Activated B cell treated with CpG ODN at 0.5 μM for 24 hours (primary cell): ENCODE measurements at regions of chr3 and their contacts with region 1.

Region 1: DNA sequence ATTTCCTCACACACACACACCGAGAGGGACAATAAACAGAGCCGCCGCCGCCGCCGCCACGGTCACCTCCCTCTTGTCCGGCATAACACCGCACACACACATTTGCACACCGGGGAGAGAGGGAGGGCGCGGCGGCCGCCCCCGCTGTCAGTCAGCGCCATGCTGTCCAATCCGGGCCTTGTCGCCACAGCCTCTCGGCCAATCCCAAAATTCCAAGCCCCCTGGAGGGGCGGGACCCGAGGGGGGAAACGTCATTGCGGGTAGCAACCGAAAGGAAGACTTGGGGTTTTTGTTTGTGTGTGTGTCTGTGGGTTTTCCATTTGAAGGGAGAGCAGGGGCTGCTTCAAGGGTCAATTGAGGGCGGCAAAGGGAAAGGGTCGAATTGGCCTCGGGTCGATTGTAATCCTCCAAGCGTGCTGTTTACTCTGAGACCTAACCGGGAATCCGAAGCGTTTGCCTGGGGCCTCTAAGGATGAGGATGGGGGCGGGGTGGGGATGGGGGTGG is at the start of gene TOP2B:
- DNase-seq: peak; percentile 89
- ATAC-seq: peak; percentile 85
- H3K4me3 Mint-ChIP-seq: peak within 1 kb of the TSS; percentile 93
- H3K27ac Mint-ChIP-seq: peak within 1 kb of the TSS; percentile 99
- H3K4me1 Mint-ChIP-seq: peaks cover 53% of the 10 kb centered on the region
- H3K27me3 Mint-ChIP-seq: no peaks in the 10 kb centered on the region
- CTCF ChIP-seq: no peak
- total RNA-seq, gene TOP2B: 117 and 125 TPM in 2 replicates

Region 2: GRCh38 chr3:23945903-23946751 is 1718.7 kb before region 1 on chr3:
- CTCF ChIA-PET with region 1: no interaction called
- POLR2A ChIA-PET with region 1: no interaction called
- intact Hi-C with region 1: loop called (anchors 10 kb)
- DNase-seq: peak; percentile 97
- ATAC-seq: peak; percentile 79
- H3K4me3 Mint-ChIP-seq: peak overlapping the region; percentile 86
- H3K27ac Mint-ChIP-seq: peak overlapping the region; percentile 94
- H3K4me1 Mint-ChIP-seq: peaks cover 44% of the 10 kb centered on the region
- H3K27me3 Mint-ChIP-seq: no peaks in the 10 kb centered on the region
- CTCF ChIP-seq: no peak

Region 3: GRCh38 chr3:25513642-25514266 is 151.1 kb before region 1 on chr3:
- CTCF ChIA-PET with region 1: no interaction called
- POLR2A ChIA-PET with region 1: no interaction called
- intact Hi-C with region 1: no loop called
- DNase-seq: no peak
- ATAC-seq: no peak
- H3K4me3 Mint-ChIP-seq: no peak overlapping the region
- H3K27ac Mint-ChIP-seq: no peak overlapping the region
- H3K4me1 Mint-ChIP-seq: no peaks in the 10 kb centered on the region
- H3K27me3 Mint-ChIP-seq: no peaks in the 10 kb centered on the region
- CTCF ChIP-seq: no peak

Region 4: DNA sequence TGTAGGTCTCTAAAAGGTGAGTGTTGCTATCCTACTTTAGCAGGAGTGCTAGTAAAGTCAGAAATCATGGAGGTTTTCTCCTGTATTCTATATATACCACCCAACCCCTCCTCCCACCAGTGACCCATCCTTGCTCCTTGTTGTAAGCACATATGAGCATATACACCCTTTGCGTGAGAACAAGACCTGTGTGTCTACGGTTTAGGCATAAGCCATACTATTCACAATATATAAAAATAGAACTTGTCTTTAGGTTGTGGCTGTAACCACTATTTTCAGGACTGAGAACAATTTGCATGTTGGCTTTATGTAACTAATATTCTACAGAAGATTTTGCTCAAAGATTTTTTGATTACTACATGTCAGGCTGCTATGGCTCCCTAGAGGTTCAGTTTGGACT is 58.9 kb after region 1 on chr3:
- CTCF ChIA-PET with region 1: interaction called, 3 read pairs
- POLR2A ChIA-PET with region 1: no interaction called
- intact Hi-C with region 1: loop called (anchors 5 kb)
- DNase-seq: no peak
- ATAC-seq: no peak
- H3K4me3 Mint-ChIP-seq: no peak overlapping the region
- H3K27ac Mint-ChIP-seq: no peak overlapping the region
- H3K4me1 Mint-ChIP-seq: no peaks in the 10 kb centered on the region
- H3K27me3 Mint-ChIP-seq: no peaks in the 10 kb centered on the region
- CTCF ChIP-seq: no peak

Region 5: DNA sequence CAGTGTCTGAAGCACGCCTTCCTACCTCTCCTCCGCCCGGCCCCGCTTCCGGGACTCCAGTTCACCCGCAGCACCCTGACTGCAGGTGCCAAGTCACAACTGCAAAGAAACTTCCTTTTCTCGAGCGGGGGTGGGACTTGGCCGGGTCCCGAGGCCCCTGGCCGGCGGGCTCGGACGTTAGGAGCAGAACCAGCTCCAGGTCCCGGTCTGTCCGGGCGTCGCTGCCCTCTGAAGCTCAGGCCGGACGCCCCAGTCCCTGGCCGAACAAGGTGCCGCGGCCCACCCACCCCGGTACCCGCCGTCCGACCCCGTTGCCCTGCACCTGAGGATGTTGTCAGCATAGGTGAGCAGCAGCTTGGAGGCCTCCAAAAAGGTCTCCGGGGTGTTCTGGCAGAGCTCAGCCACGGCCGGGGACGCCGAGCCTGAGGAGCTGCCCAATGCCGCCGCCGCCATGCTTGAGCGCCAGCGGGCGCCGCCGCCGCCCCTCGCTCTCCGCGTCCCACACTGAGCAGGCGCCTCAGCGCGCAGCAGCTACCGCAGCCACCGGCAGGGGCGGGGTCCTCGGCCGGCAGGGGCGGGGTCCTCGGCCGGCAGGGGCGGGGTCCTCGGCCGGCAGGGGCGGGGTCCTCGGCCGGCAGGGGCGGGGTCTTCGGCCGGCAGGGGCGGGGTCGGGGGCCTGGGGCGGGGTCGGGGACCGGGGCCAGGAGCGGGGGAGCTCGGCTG is 118.2 kb after region 1 on chr3 and contains the start of gene NGLY1:
- CTCF ChIA-PET with region 1: no interaction called
- POLR2A ChIA-PET with region 1: interaction called, 15 read pairs
- intact Hi-C with region 1: loop called (anchors 1 kb)
- DNase-seq: peak; percentile 78
- ATAC-seq: peak; percentile 79
- H3K4me3 Mint-ChIP-seq: peak within 1 kb of the TSS; percentile 87
- H3K27ac Mint-ChIP-seq: peak within 1 kb of the TSS; percentile 97
- H3K4me1 Mint-ChIP-seq: peaks cover 48% of the 10 kb centered on the region
- H3K27me3 Mint-ChIP-seq: no peaks in the 10 kb centered on the region
- CTCF ChIP-seq: no peak
- total RNA-seq, gene NGLY1: 104 and 127 TPM in 2 replicates

Region 6: DNA sequence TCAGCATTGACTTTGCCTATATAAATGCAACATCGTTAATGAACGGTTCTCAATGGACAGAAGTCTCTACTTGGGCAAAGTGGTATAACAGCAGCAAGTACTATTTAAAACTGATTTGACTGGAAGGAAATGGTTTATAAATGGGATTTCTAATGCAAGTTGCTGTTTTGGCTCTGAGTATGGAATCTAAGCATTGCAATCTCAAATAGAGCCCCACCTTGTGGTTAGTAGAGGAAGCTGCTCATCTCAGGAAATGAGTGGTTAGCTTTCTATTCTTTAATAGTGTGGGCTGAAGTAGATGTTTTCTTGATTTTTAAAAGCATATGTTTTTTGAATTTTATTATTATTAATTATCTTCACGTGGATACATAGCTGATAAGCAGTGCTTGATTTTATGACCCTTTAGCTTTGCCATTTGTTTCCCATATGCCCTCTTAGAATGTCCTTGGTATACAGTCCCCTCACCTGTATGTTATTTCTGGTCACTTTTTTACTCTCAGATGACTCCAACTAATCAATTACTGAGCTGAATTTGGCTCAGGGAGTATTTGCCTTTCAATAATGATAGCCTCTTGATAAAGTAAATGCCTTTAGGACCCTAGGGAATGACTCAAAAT is 192.1 kb after region 1 on chr3:
- CTCF ChIA-PET with region 1: interaction called, 17 read pairs
- POLR2A ChIA-PET with region 1: interaction called, 3 read pairs
- intact Hi-C with region 1: loop called (anchors 1 kb)
- DNase-seq: no peak
- ATAC-seq: peak; percentile 71
- H3K4me3 Mint-ChIP-seq: no peak overlapping the region
- H3K27ac Mint-ChIP-seq: no peak overlapping the region
- H3K4me1 Mint-ChIP-seq: no peaks in the 10 kb centered on the region
- H3K27me3 Mint-ChIP-seq: no peaks in the 10 kb centered on the region
- CTCF ChIP-seq: peak; percentile 92

Region 7: GRCh38 chr3:27484015-27484844 is 1819.4 kb after region 1 on chr3 and contains the start of gene SLC4A7:
- CTCF ChIA-PET with region 1: no interaction called
- POLR2A ChIA-PET with region 1: no interaction called
- intact Hi-C with region 1: loop called (anchors 1 kb)
- DNase-seq: peak; percentile 99
- ATAC-seq: peak; percentile 89
- H3K4me3 Mint-ChIP-seq: peak within 1 kb of the TSS; percentile 99
- H3K27ac Mint-ChIP-seq: peak within 1 kb of the TSS; percentile 97
- H3K4me1 Mint-ChIP-seq: peaks cover 42% of the 10 kb centered on the region
- H3K27me3 Mint-ChIP-seq: no peaks in the 10 kb centered on the region
- CTCF ChIP-seq: no peak
- total RNA-seq, gene SLC4A7: 24.3 and 31.3 TPM in 2 replicates